Head of caudate nucleus (tissue), 42 donors: ENCODE measurements at regions of chr3 and their contacts with region 1.

Region 1: DNA sequence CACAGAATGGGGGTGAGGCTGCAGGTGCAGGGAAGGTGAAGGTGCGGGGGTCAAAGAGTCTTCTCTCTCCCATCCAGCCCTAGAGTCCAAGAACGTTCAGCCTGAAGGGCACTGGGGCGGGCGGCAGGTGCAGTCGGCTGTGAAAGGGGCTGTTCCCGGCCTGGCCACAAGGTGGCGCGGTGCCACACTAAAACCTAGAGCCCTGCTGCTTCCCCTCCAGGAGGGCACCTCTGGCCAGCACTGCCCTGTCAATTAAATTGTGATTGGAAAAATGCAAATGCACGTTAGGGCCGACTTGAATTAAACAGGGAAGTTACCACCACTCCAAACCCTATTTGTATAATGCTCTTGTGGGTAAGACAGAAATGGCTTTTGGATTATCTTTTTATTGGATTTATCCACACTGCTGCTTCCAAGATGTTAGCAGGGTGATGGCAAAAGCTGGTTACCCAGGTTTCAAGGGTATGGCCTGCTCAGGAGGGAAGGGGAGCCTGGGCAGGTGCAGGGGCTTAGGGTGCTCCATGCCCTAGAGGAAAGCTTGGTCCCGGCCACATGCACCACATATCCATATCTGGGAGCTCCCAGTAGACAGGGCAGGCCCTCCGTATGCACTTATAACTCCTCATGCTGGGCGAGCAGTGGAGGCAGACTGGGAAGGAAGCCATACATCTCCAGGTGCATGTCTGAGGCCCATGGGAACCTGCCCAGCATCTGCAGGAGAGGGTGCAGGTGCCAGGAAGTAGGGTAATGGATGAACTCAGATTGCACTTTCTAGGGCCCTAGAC is 119.8 kb downstream of the ADCY5 start:
- DNase-seq: peak; percentile 54 to 95 (median 87)

Region 2: DNA sequence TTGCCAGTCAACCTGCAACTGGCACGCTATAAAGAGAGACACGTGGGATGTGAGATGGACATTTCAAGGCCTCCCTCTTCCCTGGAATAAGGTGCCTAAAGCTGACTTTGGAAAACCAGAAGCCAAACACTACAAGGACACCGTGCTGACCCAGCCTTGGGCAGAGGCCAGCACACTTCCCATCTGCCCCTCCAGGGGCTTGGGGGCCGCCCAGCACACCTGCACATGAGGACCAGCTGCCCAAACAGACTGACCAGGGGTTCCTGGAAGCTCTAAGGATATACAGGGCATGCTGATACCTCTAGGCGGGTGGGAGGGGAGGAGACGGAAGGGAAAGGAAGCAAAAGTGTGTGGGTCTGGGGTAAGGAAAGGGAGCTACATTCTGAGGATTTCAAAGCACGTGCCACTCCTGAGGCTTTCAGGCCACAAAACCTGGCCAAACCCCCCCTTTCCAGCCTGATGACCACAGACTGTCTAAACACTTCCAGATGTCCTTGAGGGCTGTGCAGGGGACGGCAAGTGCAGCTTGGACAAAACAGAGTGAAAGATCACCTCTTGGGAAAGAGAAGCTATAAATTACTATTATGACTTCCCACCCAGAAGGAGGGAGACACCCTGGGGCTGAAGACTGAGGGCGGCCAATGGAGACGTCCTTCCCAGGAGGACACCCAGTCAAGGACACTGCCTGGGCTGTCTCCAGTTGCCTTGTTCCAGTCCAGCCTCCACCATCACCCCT is 62.0 kb after region 1 on chr3:
- intact Hi-C with region 1: no loop called
- DNase-seq: no peak

Region 3: GRCh38 chr3:123489400-123490004 is 160.5 kb after region 1 on chr3:
- intact Hi-C with region 1: loop called (anchors 2 kb)
- DNase-seq: peak; percentile 66 to 93 (median 84)

Region 4: GRCh38 chr3:123503203-123503602 is 174.2 kb after region 1 on chr3:
- intact Hi-C with region 1: no loop called
- DNase-seq: no peak

Region 5: DNA sequence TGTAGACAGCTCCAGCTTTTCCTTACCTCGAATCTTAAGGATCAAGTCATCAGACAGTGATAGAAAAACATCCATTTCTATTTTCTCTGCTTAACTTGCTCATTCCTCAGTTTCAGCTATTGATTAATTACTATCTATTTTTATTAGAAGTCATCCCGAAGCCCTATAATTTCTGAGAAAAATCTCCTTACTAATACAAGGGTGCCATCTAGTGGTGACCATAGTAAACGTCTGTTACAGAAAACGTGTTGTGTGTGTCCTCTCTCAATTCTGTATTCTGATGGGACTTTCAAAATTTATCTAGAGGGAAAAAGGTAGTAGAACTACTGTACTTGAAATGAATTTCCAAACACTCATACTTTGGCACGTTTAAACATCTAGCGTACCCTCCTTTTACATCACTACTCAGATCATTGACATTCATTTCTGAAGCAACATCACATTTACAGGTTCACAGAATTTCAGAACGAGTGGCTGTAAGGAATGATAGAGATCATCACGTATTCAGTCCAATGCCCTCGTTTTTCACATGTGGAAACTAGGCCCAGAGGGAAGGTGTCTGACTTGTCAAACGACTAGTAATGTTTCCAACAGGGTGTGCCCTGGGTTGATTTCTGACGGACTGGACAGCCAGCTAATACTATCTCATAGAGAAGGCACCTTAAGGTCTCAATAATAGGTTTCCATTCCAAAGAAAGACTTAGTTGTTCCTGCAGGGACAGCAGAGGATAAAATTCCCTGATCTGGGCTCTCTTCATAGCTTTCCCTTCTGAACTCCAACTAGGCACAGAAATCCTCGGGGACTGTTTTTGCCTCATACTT is 230.2 kb after region 1 on chr3:
- intact Hi-C with region 1: loop called (anchors 5 kb)
- DNase-seq: peak in 10 of 42 donors; percentile 36 to 77 (median 50)

Region 6: DNA sequence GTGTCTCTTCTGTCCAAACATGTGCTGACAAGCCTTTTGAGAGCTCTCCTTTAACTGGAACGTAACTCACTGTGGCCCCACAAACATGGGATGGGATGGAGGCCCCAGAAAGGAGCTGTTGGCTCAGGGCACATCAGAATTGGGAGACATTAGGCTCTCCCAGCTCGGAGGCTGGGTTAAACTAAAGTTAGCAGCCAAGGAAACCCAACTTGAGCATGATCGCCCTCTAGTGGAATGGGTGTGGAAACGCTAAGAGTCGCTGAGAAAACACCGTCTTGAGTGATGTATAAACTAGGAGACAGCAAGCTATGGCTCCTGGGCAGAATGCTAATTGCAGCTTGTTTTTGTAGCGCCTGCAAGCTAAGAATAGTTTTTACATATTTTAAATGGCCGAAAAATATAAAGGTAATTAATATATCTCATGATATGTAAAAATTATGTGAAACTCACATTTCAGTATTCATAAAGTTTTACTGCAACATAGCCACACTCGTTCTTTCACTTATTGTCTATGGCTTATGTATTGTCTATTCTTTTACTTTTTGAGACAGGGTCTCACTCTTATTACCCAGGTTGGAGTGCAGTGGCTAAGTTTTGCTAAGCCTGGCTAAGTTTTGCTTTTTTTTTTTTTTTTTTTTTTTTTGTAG is 394.6 kb after region 1 on chr3:
- intact Hi-C with region 1: no loop called
- DNase-seq: peak in 40 of 42 donors; percentile 30 to 87 (median 70)

Region 7: DNA sequence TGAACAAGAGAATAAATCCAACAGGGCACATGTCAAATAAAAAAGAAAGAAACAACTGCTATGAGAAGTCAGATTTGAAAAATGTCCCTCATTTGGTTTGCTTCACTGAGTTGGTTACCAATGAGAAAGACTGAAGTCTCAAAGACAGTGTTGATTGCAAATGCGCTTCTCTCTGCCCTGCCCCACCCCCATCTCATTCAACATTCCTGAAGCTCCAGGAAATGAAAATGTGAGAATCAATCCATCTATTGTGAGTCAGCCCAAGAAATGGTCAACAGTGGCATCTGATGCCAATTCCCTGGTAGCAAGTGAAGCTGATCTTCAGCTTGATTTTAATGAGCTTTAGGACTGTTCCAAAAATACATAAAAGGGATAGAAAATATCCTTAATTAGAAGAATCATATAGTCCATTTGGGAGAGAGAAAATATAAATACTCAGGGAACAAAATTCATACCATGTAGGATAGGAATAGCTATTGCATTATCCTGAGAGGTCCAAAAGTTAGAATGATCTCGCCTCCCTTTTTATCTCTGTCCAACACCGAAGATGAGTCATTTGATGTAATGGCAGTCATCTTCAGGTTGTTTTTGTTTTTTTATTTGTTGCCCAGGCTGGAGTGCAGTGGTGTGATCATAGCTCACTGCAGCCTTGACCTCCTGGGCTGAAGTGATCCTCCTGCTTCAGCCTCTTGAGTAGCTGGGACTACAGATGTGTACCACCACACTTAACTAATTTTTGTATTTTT is 1201.0 kb after region 1 on chr3:
- intact Hi-C with region 1: no loop called
- DNase-seq: peak in 33 of 42 donors; percentile 11 to 79 (median 44)